Dendritic cell treated with granulocyte-macrophage colony-stimulating factor and Interleukin-4, amounts not matched to agents 40 ng/mL and 50 ng/mL, for 4 days (primary cell): ENCODE measurements at regions of chr1 and their contacts with region 1.

Region 1: DNA sequence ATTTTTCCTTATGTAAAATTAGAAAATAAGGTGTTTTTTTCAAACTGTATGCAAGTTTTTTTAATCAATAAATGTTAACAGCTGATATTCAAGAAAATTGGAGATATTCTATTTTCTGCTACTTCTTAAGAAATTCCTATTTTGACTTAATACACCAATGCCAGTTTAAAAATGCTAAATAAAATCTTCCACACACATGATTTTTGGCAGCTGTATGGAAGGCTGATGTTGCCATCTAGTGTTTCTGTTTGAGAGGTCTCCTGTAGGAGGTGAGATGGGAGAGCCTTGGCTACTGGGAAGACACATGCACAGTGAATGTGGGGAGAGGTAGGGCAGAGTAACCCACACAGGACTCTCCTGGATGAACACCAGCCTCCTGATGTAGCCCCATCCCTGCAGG is 29.2 kb upstream of the OR2B11 start:
- H3K4me3 Mint-ChIP-seq: no peak overlapping the region
- H3K27ac Mint-ChIP-seq: no peak overlapping the region
- H3K4me1 Mint-ChIP-seq: no peaks in the 10 kb centered on the region
- H3K27me3 Mint-ChIP-seq: peaks cover 11% of the 10 kb centered on the region

Region 2: GRCh38 chr1:246860401-246860800 is 626.7 kb before region 1 on chr1:
- intact Hi-C with region 1: no loop called
- H3K4me3 Mint-ChIP-seq: no peak overlapping the region
- H3K27ac Mint-ChIP-seq: no peak overlapping the region
- H3K4me1 Mint-ChIP-seq: no peaks in the 10 kb centered on the region
- H3K27me3 Mint-ChIP-seq: no peaks in the 10 kb centered on the region

Region 3: DNA sequence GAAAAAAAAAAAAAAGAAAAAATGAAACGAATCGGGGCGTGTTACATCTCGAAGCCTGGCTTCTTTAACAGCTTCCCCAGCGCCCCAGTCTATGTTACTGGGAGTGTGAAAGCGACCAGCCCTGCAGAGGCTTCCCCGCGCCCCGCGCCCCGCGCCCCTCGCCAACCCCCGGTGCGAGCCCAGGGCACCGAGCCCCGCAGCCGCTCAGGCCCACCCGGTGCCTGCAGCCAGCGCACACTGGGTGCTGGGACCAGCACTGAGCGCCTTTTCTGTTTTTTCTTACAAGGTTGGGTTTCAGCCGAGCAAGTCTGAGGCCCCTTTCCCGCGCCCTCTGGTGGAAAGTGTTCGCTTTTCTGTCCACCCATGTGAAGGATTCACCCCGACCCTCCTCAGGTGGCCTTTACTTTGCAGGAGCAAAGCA is 113.3 kb before region 1 on chr1:
- intact Hi-C with region 1: loop called (anchors 1 kb)
- H3K4me3 Mint-ChIP-seq: peak overlapping the region; percentile 45
- H3K27ac Mint-ChIP-seq: peak overlapping the region; percentile 52
- H3K4me1 Mint-ChIP-seq: peaks cover 21% of the 10 kb centered on the region
- H3K27me3 Mint-ChIP-seq: no peaks in the 10 kb centered on the region

Region 4: DNA sequence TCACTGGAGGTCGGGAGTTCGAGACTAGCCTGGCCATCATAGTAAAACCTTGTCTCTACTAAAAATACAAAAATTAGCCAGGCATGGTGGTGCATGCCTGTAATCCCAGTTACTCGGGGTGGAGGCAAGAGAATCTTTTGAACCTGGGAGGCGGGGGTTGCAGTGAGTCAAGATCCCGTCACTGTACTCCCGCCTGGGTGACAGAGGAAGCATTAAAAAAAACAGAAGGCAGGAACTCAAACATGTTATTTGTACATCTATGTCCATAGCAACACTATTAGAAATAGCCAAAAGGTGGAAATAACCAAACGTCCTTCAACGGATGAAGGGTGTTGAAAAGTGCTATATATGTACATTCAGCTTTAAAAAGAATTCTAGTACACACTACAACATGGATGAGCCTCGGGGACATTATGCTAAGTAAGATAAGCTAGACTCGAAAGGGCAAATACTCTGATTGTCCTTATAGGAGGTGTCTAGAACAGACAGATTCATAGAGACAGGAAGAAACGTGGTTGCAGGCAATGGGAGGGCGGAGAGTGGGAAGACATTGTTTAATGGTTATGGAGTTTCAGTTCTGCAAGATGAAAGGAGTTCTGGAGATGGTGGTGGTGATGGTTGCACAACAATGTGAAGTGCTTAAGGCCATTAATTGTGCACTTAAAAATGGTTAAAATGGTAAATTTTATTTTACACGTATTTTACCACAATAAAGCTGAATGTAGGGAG is 51.9 kb before region 1 on chr1:
- intact Hi-C with region 1: loop called (anchors 5 kb)
- H3K4me3 Mint-ChIP-seq: peak overlapping the region; percentile 24
- H3K27ac Mint-ChIP-seq: peak overlapping the region; percentile 74
- H3K4me1 Mint-ChIP-seq: peaks cover 95% of the 10 kb centered on the region
- H3K27me3 Mint-ChIP-seq: no peaks in the 10 kb centered on the region

Region 5: DNA sequence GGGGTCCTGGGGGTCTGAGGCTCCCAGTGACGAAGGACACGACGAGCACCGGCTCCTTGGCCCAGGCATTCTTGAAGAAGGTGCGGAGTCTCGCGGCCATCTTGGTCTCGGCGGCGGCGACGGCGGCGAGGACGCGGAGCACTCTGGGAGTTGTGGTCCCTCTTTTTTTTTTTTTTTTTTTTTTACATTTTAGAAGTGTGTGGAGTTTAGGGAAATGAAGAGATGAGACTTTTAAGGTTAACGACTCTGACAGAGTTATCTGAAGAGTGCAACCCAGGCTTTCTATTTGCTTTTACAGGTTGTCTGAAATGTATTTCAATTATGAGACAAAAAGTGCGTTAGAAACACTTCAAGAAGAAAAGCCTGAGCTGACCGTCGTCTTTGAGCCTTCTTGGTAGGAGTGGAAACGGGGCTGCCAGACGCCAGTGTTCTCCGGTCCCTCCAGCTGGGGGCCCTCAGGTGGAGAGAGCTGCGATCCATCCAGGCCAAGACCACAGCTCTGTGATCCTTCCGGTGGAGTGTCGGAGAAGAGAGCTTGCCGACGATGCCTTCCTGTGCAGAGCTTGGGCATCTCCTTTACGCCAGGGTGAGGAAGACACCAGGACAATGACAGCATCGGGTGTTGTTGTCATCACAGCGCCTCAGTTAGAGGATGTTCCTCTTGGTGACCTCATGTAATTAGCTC is 38.8 kb before region 1 on chr1:
- intact Hi-C with region 1: loop called (anchors 5 kb)
- H3K4me3 Mint-ChIP-seq: peak overlapping the region; percentile 35
- H3K27ac Mint-ChIP-seq: peak overlapping the region; percentile 89
- H3K4me1 Mint-ChIP-seq: peaks cover 84% of the 10 kb centered on the region
- H3K27me3 Mint-ChIP-seq: no peaks in the 10 kb centered on the region